Ascending aorta (tissue), 2 donors: ENCODE measurements at regions of chr13 and their contacts with region 1.

Region 1: DNA sequence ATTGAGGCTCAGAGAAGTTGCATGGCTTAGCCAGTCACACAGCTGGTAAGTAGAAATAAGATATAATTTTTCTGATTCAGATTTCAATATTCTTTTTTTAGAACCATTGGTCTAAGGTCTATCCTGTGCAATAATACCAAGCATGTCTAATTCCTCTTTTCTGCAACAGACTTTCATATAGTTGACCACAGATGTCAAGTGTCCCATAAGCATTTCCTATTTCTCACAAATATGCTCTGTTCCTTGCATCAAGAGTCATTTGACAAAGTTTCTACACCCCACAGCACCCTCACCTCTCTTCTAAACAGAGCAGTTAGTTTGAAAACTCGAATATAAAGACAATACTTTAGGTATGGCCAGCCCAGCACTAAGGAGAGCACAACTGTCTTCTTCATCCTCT is 26.8 kb upstream of the SACS start:
- DNase-seq: no peak
- H3K4me3 ChIP-seq: no peak overlapping the region
- H3K27ac ChIP-seq: no peak overlapping the region
- H3K4me1 ChIP-seq: peaks cover 0 to 5% of the 10 kb centered on the region in 2 donors
- H3K27me3 ChIP-seq: no peaks in the 10 kb centered on the region
- CTCF ChIP-seq: no peak

Region 2: DNA sequence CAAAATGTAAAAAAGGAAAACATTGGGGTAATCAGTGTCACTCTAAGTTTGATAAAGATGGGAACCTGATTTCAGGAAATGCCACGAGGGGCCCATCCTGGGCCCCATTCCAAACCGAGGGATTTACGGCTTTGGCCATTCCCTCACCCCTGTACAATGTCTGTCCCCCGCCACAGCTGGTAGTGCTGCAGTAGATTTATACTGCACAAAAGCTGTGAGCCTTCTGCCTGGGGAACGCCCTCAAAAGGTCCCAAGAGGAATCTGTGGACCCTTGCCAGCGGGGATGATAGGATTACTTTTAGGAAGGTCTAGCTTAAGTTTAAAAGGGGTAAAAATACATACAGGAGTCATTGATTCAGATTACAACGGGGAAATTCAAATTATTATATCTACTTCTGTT is 452.9 kb before region 1 on chr13:
- intact Hi-C with region 1: no loop called
- DNase-seq: no peak
- H3K4me3 ChIP-seq: no peak overlapping the region
- H3K27ac ChIP-seq: no peak overlapping the region
- H3K4me1 ChIP-seq: no peaks in the 10 kb centered on the region
- H3K27me3 ChIP-seq: no peaks in the 10 kb centered on the region
- CTCF ChIP-seq: no peak

Region 3: GRCh38 chr13:23433171-23434153 is 26.8 kb before region 1 on chr13 and contains the start of gene SACS:
- intact Hi-C with region 1: loop called (anchors 2 kb)
- DNase-seq: no peak
- H3K4me3 ChIP-seq: peak within 1 kb of the TSS; percentile 55 to 71
- H3K27ac ChIP-seq: peak within 1 kb of the TSS; percentile 42 to 51
- H3K4me1 ChIP-seq: no peaks in the 10 kb centered on the region
- H3K27me3 ChIP-seq: no peaks in the 10 kb centered on the region
- CTCF ChIP-seq: no peak
- total RNA-seq, gene SACS: 13.1 TPM

Region 4: GRCh38 chr13:24160454-24161009 is 700.2 kb after region 1 on chr13 and contains the start of gene SPATA13:
- intact Hi-C with region 1: no loop called
- DNase-seq: peak; percentile 63 to 94
- H3K4me3 ChIP-seq: peak within 1 kb of the TSS; percentile 61 to 89
- H3K27ac ChIP-seq: peak within 1 kb of the TSS in 1 of 2 donors; percentile 41
- H3K4me1 ChIP-seq: no peaks in the 10 kb centered on the region
- H3K27me3 ChIP-seq: no peaks in the 10 kb centered on the region
- CTCF ChIP-seq: no peak
- total RNA-seq, gene SPATA13: 38.2 TPM